Activated CD8-positive, alpha-beta T cell treated with anti-CD3 and anti-CD28 coated beads, Interleukin-2, amount 10 ng/mL, durations not matched to agents 7 days and 5 days (primary cell): ENCODE measurements at regions of chr1 and their contacts with region 1.

Region 1: GRCh38 chr1:110460253-110461220 is 9.6 kb downstream of the PROK1 start:
- DNase-seq: peak; percentile 88
- ATAC-seq: peak; percentile 88
- H3K4me3 Mint-ChIP-seq: no peak overlapping the region
- H3K27ac Mint-ChIP-seq: no peak overlapping the region
- H3K4me1 Mint-ChIP-seq: no peaks in the 10 kb centered on the region
- H3K27me3 Mint-ChIP-seq: no peaks in the 10 kb centered on the region

Region 2: GRCh38 chr1:110196917-110197765 is 263.4 kb before region 1 on chr1:
- CTCF ChIA-PET with region 1: interaction called, 92 read pairs
- POLR2A ChIA-PET with region 1: no interaction called
- DNase-seq: peak; percentile 66
- ATAC-seq: peak; percentile 87
- H3K4me3 Mint-ChIP-seq: no peak overlapping the region
- H3K27ac Mint-ChIP-seq: no peak overlapping the region
- H3K4me1 Mint-ChIP-seq: peaks cover 2% of the 10 kb centered on the region
- H3K27me3 Mint-ChIP-seq: no peaks in the 10 kb centered on the region

Region 3: DNA sequence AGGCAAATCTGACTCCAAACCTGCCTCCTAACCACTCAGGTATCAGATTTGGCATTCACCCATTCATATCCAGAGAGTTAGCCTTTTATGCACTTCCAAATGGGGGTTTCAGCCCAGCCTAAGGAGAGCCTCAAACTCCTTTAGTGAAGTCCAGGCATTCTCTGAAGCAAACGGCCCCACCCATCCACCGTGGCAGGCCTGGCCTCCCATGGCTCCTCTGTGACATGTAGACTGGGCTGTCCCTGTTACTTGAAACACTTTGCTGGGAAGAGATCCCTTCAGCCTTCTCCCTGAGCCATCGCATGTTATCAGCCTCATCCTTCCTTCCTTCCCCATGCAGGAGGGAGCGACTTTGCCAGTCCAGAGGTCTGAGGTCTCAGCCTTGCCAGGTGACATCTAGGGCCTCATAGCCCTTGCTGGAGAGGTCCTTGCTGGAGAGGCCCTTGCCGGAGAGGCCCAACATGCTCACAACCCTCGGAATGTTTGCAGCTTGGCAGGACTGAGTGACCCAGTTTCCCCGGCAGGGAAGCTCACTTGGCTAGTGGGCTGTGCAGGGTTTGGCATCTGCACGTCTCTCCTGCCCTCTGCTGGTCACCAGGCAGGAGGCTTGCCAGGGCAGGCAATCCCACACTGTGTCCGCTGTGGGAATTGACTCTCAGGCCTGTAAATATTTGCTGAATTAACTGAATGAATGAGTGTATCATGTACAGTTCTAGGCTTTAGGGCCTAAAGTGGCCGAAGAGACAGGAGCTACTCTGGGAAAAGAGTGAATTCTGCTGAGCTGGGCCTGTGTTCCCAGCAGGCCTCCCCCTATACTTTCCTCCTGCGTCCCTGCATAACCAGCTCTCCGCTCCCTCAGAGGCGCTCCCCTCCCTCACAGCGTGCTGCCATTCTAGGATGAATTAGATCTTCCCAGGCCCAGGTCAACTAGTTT is 148.1 kb before region 1 on chr1:
- CTCF ChIA-PET with region 1: interaction called, 14 read pairs
- POLR2A ChIA-PET with region 1: no interaction called
- DNase-seq: peak; percentile 76
- ATAC-seq: peak; percentile 97
- H3K4me3 Mint-ChIP-seq: no peak overlapping the region
- H3K27ac Mint-ChIP-seq: no peak overlapping the region
- H3K4me1 Mint-ChIP-seq: no peaks in the 10 kb centered on the region
- H3K27me3 Mint-ChIP-seq: no peaks in the 10 kb centered on the region

Region 4: DNA sequence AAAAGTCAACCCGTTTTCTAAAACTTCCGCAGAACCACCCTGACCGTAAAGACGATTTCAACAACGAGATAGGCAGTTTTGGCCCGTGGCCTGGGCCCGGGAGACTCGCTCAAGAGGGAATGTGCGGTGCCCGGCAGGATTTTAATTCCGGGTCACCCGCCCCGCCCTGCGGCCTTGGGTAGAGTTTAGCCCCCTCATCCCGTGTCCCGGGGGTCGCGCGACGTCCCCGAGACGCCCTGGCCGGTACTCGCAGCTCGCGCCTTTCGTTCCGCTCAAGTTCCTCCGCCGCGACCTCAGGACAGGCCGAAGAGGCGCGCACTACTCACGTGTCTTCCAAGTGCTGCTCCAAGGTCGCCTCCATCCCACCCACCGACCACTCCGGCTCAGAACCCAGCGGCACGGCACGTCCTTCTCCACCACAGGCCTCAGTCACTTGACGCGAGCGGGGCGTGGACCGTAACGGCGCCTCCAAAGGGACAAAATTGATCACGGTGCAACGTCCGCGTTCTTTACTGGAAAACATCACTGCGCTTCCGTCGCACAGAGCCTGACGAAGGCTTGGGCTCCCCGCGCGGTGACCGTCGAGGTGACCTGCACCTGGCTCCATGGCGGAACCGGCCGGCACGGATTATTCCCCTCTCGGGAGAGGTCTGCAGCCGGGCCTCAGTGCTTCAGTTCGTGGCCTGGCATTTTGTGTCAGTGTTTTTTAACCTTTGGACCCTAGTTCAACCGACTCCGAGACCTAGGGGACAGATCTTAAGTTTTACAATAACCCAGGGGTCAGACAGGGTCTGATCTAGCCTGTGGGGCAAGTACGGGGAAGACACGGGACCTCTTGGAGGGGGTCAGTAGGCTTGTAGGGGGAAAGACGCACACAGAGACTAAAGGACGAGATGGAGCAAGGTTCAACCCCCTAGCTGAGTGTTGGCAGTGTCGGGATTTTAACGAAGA is 53.0 kb before region 1 on chr1 and contains the start of gene LAMTOR5:
- CTCF ChIA-PET with region 1: interaction called, 68 read pairs
- POLR2A ChIA-PET with region 1: no interaction called
- DNase-seq: peak; percentile 96
- ATAC-seq: peak; percentile 93
- H3K4me3 Mint-ChIP-seq: peak within 1 kb of the TSS; percentile 100
- H3K27ac Mint-ChIP-seq: peak within 1 kb of the TSS; percentile 100
- H3K4me1 Mint-ChIP-seq: peaks cover 28% of the 10 kb centered on the region
- H3K27me3 Mint-ChIP-seq: no peaks in the 10 kb centered on the region
- total RNA-seq, gene LAMTOR5: 123 TPM

Region 5: GRCh38 chr1:110433803-110434202 is 26.7 kb before region 1 on chr1:
- CTCF ChIA-PET with region 1: interaction called, 22 read pairs
- POLR2A ChIA-PET with region 1: no interaction called
- DNase-seq: no peak
- ATAC-seq: no peak
- H3K4me3 Mint-ChIP-seq: no peak overlapping the region
- H3K27ac Mint-ChIP-seq: no peak overlapping the region
- H3K4me1 Mint-ChIP-seq: no peaks in the 10 kb centered on the region
- H3K27me3 Mint-ChIP-seq: peaks cover 11% of the 10 kb centered on the region

Region 6: DNA sequence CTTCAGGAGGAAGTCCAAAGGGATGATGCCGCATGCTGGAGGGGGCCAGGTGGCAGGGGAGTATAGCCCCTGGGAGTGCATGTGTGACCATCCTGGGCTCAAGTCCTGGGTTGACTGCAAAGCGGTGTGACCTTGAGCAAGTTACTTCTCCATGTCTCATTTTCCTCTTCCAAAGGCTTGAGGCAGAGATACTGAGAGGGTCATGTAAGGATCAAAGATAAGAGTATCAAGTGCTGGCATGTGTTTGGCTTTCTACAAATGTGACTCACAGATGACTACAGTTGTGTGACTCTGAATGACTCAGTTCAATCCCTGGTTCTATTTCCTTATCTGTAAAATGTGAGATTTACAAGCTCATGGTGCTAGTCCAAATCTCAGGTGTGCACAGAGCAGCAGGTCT is 16.5 kb after region 1 on chr1:
- CTCF ChIA-PET with region 1: interaction called, 13 read pairs
- POLR2A ChIA-PET with region 1: no interaction called
- DNase-seq: no peak
- ATAC-seq: no peak
- H3K4me3 Mint-ChIP-seq: no peak overlapping the region
- H3K27ac Mint-ChIP-seq: no peak overlapping the region
- H3K4me1 Mint-ChIP-seq: no peaks in the 10 kb centered on the region
- H3K27me3 Mint-ChIP-seq: peaks cover 11% of the 10 kb centered on the region

Region 7: GRCh38 chr1:110602466-110602865 is 141.9 kb after region 1 on chr1:
- CTCF ChIA-PET with region 1: no interaction called
- POLR2A ChIA-PET with region 1: no interaction called
- DNase-seq: no peak
- ATAC-seq: no peak
- H3K4me3 Mint-ChIP-seq: no peak overlapping the region
- H3K27ac Mint-ChIP-seq: no peak overlapping the region
- H3K4me1 Mint-ChIP-seq: peaks cover 11% of the 10 kb centered on the region
- H3K27me3 Mint-ChIP-seq: peaks cover 35% of the 10 kb centered on the region